ENCODE measurements at regions of chr11 and their contacts with region 1.

Region 1: GRCh38 chr11:22337596-22338485 is at the start of gene SLC17A6:
- DNase-seq: peak in 1 of 2 experiments; percentile 77
- H3K4me3 ChIP-seq: peak within 1 kb of the TSS; percentile 25 to 58 (median 43); a peak in 7 of 8 replicates
- H3K27ac ChIP-seq: no peak within 1 kb of the TSS
- H3K4me1 ChIP-seq: peaks cover 11 to 24% (median 17%) of the 10 kb centered on the region in 4 experiments
- H3K27me3 ChIP-seq: peaks cover 8 to 35% (median 21%) of the 10 kb centered on the region in 4 experiments; a peak in 6 of 7 replicates
- CTCF ChIP-seq: no peak
- EP300 ChIP-seq: no peak
- POLR2A ChIP-seq: no peak
- RAD21 ChIP-seq: 0 out of 4 replicates have a peak, but pooled peaks of 1 of the 2 experiments have one; percentile 8
- total RNA-seq, gene SLC17A6: 0.73 and 1.6 TPM in 2 replicates

Region 2: DNA sequence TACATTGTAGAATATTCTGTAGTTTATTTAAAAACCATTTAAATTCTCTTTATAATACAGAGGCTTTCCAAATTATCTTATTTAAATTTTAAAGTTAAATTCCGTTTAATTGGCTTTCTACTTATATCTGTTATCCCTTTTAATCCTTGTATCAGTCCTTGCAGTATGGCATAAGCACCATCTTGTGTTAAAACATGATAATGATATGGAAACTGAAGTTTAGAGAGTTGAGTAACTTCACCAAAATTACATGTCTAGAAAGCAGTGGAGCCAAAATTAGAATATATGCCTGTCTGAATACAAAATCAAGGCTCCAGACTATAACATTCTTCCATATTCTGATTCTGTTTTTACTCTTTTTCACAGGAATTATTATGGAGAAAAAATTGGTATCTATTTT is 88.0 kb before region 1 on chr11:
- CTCF ChIA-PET with region 1: no interaction called
- POLR2A ChIA-PET with region 1: no interaction called
- DNase-seq: no peak
- H3K4me3 ChIP-seq: no peak overlapping the region
- H3K27ac ChIP-seq: no peak overlapping the region
- H3K4me1 ChIP-seq: no peaks in the 10 kb centered on the region
- H3K27me3 ChIP-seq: no peaks in the 10 kb centered on the region
- CTCF ChIP-seq: no peak
- EP300 ChIP-seq: no peak
- POLR2A ChIP-seq: no peak
- RAD21 ChIP-seq: no peak

Region 3: GRCh38 chr11:22472306-22472705 is 134.5 kb after region 1 on chr11:
- CTCF ChIA-PET with region 1: interaction called, 17 read pairs
- POLR2A ChIA-PET with region 1: no interaction called
- DNase-seq: no peak
- H3K4me3 ChIP-seq: no peak overlapping the region
- H3K27ac ChIP-seq: no peak overlapping the region
- H3K4me1 ChIP-seq: no peaks in the 10 kb centered on the region
- H3K27me3 ChIP-seq: no peaks in the 10 kb centered on the region
- CTCF ChIP-seq: peak in 2 of 3 experiments; percentile 36 to 52; a peak in 2 of 4 replicates
- EP300 ChIP-seq: no peak
- POLR2A ChIP-seq: no peak
- RAD21 ChIP-seq: peak; percentile 57 to 66

Region 4: DNA sequence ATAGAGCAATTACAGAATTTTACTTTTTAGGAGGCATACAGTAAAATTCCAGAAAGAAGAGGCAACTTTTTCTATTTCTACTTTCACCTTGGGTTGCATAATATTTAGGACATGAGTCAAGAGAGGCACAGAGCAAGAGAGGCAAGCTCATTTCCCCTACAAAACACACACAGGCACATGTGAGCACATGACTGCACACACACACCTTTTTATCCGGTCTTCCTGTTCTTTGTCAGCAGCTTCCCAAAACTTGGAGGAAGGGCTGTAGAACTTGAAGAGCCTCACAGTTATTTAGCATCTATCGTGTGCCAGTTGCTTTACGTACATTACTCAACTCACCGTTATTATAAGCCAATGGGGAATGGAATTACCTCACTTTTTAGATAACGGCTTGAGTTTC is 560.2 kb after region 1 on chr11:
- CTCF ChIA-PET with region 1: no interaction called
- POLR2A ChIA-PET with region 1: no interaction called
- DNase-seq: no peak
- H3K4me3 ChIP-seq: no peak overlapping the region
- H3K27ac ChIP-seq: no peak overlapping the region
- H3K4me1 ChIP-seq: no peaks in the 10 kb centered on the region
- H3K27me3 ChIP-seq: peaks cover 0 to 1% (median 0%) of the 10 kb centered on the region in 4 experiments; a peak in 2 of 7 replicates
- CTCF ChIP-seq: no peak
- EP300 ChIP-seq: no peak
- POLR2A ChIP-seq: no peak
- RAD21 ChIP-seq: no peak

Measured in H1 (cell line).